B cell (primary cell): ENCODE measurements at regions of chr15 and their contacts with region 1.

Region 1: DNA sequence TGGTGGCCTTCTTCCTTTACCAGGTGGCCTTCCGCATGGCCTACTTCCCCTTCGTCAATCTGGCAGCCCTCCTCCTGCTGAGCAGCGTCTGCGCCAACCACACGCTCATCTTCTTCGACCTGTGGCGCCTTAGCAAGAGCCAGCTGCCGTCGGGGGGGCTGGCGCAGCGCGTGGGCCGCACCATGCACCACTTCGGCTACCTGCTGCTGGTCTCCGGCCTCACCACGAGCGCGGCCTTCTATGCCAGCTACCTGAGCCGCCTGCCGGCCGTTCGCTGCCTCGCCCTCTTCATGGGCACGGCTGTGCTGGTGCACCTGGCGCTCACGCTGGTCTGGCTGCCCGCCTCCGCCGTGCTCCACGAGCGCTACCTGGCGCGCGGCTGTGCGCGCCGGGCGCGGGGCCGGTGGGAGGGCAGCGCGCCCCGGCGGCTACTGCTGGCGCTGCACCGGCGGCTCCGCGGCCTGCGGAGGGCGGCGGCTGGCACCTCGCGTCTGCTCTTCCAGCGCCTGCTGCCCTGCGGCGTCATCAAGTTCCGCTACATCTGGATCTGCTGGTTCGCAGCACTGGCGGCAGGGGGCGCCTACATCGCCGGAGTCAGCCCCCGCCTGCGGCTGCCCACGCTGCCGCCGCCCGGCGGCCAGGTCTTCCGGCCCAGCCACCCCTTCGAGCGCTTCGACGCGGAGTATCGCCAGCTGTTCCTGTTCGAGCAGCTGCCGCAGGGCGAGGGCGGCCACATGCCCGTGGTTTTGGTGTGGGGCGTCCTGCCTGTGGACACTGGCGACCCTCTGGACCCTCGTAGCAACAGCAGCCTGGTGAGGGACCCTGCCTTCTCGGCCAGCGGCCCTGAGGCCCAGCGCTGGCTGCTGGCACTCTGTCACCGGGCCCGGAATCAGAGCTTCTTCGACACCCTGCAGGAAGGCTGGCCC is 9.9 kb downstream of the DISP2 start:
- DNase-seq: peak; percentile 94
- ATAC-seq: peak; percentile 92
- H3K4me3 ChIP-seq: peak overlapping the region; percentile 21 to 62 (median 57)
- H3K4me3 Mint-ChIP-seq: peak overlapping the region; percentile 86
- H3K27ac ChIP-seq: peak overlapping the region; percentile 26 to 43
- H3K27ac Mint-ChIP-seq: peak overlapping the region; percentile 83
- H3K4me1 ChIP-seq: peaks cover 14 to 26% of the 10 kb centered on the region in 2 donors
- H3K4me1 Mint-ChIP-seq: peaks cover 22% of the 10 kb centered on the region
- H3K27me3 ChIP-seq: no peaks in the 10 kb centered on the region
- H3K27me3 Mint-ChIP-seq: no peaks in the 10 kb centered on the region
- CTCF ChIP-seq: peak; percentile 94

Region 2: DNA sequence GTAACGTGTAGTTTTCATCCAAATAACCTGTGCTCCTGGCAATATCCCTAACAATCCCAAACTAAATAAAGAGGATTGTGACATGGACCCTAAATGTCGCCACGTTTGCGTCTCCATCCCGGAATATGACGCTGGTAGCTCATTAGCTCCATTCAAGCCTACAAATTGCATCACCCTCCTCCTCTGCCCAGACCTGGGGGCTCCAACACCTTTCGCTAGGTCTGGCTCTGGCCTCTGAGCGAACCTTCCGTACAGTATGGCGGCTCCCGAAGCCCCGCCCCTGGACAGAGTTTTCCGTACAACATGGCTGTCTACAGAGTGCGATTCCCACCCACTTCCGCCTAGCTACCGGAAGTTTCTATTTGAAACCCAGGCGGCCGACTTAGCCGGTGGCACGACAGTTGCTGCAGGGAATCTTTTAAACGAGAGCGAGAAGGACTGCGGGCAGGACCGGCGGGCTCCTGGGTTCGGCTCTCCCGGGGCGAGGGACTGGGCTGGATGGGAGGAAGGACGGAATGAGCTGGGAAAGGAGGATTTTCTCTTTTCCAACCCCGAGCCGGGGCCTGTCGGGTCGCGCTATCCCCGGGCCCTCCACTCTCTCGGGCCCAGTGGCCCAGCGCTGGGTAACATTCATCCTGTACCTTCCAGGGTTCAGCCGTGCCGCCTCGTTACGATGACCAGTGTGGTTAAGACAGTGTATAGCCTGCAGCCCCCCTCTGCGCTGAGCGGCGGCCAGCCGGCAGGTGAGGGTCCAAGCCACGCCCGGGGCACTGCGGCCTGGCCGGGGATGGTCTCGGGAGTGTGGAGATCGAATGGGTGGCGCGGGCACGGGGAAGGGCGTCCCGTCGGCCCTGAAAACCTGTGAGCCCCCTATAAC is 14.9 kb after region 1 on chr15 and contains the start of gene KNSTRN:
- CTCF ChIA-PET with region 1: interaction called, 14 read pairs
- POLR2A ChIA-PET with region 1: no interaction called
- intact Hi-C with region 1: loop called (anchors 1 kb)
- DNase-seq: peak; percentile 93
- ATAC-seq: peak; percentile 100
- H3K4me3 ChIP-seq: peak within 1 kb of the TSS; percentile 53 to 89 (median 84)
- H3K4me3 Mint-ChIP-seq: peak within 1 kb of the TSS; percentile 98
- H3K27ac ChIP-seq: peak within 1 kb of the TSS in 1 of 2 donors; percentile 40
- H3K27ac Mint-ChIP-seq: peak within 1 kb of the TSS; percentile 82
- H3K4me1 ChIP-seq: peaks cover 6 to 13% of the 10 kb centered on the region in 2 donors
- H3K4me1 Mint-ChIP-seq: peaks cover 12% of the 10 kb centered on the region
- H3K27me3 ChIP-seq: no peaks in the 10 kb centered on the region
- H3K27me3 Mint-ChIP-seq: no peaks in the 10 kb centered on the region
- CTCF ChIP-seq: no peak
- total RNA-seq, gene KNSTRN: 12.6 and 14.0 TPM in 2 replicates